MCF 10A (cell line): ENCODE measurements at regions of chr1 and their contacts with region 1.

Region 1: DNA sequence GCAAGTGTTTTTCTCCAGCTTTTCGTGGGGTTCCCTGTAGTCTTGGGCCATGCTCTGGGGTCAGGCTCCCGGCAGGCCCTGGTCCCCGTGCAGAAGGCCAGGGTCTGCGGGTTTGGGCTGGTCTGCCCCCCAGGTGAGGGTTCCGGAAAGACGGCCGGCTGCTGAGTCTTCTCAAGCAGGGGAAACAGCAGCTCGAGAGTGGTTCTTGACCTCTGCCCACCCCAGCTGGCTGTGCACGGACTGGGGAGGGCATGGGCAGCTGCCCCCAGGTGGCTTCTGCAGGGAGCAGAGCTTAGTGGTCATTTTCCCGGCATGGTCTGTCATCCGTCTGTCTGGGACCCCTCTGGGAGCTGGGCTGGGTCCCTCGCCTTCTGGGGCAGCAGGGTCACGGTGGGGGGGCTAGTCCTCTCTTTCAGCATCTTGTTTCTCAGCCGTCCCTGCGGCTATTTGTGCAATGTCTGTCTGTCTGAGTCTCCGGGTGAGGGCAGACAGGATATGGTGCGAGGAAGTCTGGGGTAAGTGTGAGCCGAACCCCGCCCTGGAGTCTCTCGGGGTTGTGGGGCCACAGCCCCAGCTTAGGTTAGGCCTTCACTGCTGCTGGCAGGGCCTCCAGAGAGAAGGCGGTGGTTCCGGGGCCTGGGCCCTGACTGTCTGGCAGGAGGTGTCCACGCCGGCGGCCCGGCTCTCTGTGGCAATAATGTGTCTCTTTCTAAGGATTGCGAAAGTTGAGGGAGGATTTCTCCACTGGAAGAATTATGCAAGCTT is 6.1 kb downstream of the SKI start:
- DNase-seq: peak; percentile 98
- H3K4me3 Mint-ChIP-seq: peak overlapping the region; percentile 63
- H3K27ac Mint-ChIP-seq: peak overlapping the region; percentile 44
- H3K4me1 Mint-ChIP-seq: peaks cover 23% of the 10 kb centered on the region
- H3K27me3 Mint-ChIP-seq: no peaks in the 10 kb centered on the region
- CTCF ChIP-seq: no peak

Region 2: GRCh38 chr1:2003278-2004131 is 230.7 kb before region 1 on chr1 and contains the start of gene CFAP74:
- CTCF ChIA-PET with region 1: no interaction called
- POLR2A ChIA-PET with region 1: no interaction called
- intact Hi-C with region 1: no loop called
- DNase-seq: no peak
- H3K4me3 Mint-ChIP-seq: no peak within 1 kb of the TSS
- H3K27ac Mint-ChIP-seq: no peak within 1 kb of the TSS
- H3K4me1 Mint-ChIP-seq: no peaks in the 10 kb centered on the region
- H3K27me3 Mint-ChIP-seq: no peaks in the 10 kb centered on the region
- CTCF ChIP-seq: no peak
- total RNA-seq, gene CFAP74: not detected in 2 replicates

Region 3: DNA sequence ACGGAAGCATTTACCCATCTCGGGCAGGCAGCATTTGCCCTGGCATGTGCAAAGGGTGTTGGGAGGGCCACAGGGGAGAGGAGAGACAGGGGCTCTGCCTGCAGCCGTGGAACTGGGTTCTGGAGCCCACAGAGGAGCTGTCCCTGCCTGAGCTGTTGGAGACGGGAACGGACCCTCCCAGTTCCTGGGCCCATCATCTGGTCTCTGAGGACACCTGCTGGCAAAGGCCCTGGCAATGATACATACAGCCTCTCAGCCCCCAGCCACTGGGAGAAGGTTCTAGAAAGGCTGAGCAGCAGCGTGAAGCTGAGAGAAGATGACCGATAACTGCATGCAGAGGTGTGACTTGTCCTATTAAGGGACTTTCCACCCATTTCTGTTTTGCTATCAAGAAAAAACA is 71.0 kb before region 1 on chr1:
- CTCF ChIA-PET with region 1: no interaction called
- POLR2A ChIA-PET with region 1: no interaction called
- intact Hi-C with region 1: no loop called
- DNase-seq: no peak
- H3K4me3 Mint-ChIP-seq: no peak overlapping the region
- H3K27ac Mint-ChIP-seq: no peak overlapping the region
- H3K4me1 Mint-ChIP-seq: no peaks in the 10 kb centered on the region
- H3K27me3 Mint-ChIP-seq: no peaks in the 10 kb centered on the region
- CTCF ChIP-seq: no peak

Region 4: DNA sequence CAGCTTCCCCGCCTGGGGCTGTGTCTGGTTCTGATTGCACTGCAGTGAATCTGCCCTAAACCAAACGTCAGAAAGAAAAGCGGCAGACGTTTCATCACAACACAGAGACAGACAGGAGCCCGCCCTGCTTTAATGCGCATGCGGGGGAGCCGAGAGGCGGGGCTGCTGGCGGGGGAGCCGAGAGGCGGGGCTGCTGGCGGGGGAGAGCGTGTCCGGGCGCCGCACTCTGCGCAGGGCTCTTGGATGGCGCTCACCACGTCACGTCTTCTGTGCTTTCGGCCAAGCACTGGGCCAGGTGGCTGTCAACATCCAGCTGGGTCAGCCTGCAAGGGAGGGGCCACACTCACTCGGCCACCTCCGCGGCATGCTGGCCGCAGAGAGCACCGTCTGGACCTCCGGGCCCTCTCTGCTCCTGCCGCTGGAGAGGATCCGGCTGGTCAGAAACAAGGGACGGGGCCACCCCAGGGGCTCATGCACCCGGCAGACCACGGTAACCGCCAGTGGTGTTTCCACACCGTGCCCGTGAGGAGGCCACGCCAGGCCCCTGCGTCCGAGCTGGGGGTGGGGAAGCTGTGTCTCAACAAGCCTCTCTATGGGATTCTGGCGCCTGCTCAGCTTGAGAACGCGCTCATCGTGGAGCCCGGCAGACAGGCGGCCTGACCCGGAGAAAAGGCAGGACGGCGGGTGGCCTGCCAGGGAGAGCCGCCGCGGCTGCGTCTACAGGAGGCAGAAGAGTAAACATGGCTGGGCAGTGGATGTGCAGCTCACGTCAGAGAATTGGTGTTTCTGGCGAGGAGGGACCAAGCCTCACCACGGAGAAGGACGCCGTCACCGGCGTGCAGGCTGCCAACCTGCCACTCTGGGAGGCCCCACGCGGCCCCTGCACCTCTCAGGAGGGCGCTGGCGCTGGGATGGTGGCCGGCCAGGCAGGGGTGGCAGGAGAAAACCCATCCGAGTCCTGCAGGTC is 44.4 kb before region 1 on chr1:
- CTCF ChIA-PET with region 1: interaction called, 10 read pairs
- POLR2A ChIA-PET with region 1: interaction called, 17 read pairs
- intact Hi-C with region 1: no loop called
- DNase-seq: peak; percentile 95
- H3K4me3 Mint-ChIP-seq: peak overlapping the region; percentile 83
- H3K27ac Mint-ChIP-seq: peak overlapping the region; percentile 82
- H3K4me1 Mint-ChIP-seq: peaks cover 5% of the 10 kb centered on the region
- H3K27me3 Mint-ChIP-seq: no peaks in the 10 kb centered on the region
- CTCF ChIP-seq: no peak

Region 5: DNA sequence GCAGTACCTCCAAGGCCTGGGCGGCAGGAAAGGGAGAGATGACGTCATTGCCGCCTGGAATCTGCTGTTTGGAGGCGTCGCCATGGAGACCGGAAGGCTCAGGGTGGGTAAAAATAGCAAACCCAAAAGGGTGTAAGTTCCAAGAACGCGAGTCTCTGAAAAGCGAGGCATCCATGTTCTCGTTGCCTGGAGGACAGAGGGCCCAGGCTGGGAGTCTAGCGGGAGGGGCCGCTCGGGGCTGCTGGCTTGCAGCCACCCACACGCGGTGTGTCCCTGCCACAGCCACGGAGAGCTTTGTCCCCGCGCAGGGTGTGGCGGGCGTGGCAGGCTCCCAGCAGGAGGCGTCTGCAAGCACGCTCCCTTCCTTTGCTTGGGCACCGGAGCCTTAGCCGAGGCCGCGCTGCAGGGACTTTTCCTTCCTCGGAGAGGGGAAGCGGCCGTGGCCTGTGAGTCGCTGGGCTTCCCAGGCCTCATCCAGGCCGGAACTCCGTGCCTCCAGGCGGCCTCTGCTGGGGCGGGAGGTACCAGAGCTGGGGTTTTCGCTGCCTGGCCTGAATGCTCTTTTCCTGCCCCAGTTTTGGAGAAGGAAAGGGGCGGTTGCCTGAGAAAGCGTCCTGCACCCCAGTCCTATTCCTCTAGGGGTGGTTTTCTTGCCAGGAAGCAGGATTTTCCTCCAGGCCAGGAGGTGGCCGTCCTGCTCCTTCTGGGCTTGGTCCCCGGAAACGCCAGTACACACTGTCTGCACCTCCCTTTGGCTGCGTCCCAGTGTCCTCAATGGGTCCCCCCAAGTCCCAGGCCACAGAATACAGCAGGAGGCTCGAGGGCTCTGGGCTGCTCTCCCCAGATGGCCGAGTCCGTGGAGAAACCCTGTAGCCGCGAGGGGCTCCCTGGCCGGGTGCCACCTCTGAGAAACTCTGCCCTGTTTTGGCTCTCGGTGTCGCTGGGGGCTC is 21.4 kb before region 1 on chr1:
- CTCF ChIA-PET with region 1: interaction called, 14 read pairs
- POLR2A ChIA-PET with region 1: interaction called, 23 read pairs
- intact Hi-C with region 1: loop called (anchors 1 kb)
- DNase-seq: peak; percentile 89
- H3K4me3 Mint-ChIP-seq: peak overlapping the region; percentile 16
- H3K27ac Mint-ChIP-seq: peak overlapping the region; percentile 83
- H3K4me1 Mint-ChIP-seq: peaks cover 14% of the 10 kb centered on the region
- H3K27me3 Mint-ChIP-seq: no peaks in the 10 kb centered on the region
- CTCF ChIP-seq: peak; percentile 13

Region 6: DNA sequence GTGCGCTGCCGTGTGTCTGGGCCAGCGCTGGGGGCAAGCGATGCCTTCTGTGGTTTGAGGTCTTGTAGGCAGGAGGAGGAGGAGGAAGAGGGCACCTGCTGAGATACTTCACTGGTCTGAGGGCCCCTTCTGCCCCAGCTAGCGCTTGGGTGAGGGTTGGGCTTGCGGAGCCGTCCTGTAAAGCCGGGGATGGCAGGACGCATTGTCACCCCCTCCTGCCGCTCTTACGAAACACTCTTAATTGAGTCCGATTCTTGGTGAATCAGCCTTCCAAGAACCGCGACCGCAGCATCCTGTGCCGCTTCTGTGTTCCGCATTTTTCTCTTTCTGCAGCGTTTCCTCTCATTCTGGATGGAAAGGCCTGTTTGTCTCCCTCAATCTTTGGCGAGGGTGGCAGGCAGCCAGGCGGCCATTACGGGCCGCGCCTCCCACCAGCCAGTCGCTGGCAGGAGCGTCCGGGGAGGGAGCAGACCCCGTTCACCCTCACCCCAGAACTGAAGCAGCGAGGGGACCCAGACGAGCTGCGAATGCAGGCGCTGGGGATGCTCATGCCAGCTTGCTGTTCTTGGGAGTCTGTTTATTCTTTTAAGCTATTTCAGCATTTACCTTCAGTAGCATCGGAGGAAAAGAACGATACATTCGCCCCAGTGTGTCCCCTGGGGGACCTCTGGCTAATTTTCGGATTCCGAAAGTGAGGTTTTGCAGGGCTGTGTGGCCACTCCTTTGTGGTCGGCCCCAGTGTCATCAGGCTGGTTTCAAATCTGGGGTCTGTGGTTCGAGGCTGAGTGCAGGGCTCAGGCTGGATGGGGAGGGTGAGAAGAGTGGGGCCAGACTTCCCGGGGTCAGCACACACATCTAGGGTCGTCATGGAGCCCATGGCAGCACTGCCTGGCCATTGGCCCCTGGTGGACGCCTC is 56.7 kb after region 1 on chr1:
- CTCF ChIA-PET with region 1: no interaction called
- POLR2A ChIA-PET with region 1: interaction called, 4 read pairs
- intact Hi-C with region 1: loop called (anchors 5 kb)
- DNase-seq: peak; percentile 97
- H3K4me3 Mint-ChIP-seq: peak overlapping the region; percentile 69
- H3K27ac Mint-ChIP-seq: peak overlapping the region; percentile 81
- H3K4me1 Mint-ChIP-seq: peaks cover 26% of the 10 kb centered on the region
- H3K27me3 Mint-ChIP-seq: no peaks in the 10 kb centered on the region
- CTCF ChIP-seq: no peak

Region 7: DNA sequence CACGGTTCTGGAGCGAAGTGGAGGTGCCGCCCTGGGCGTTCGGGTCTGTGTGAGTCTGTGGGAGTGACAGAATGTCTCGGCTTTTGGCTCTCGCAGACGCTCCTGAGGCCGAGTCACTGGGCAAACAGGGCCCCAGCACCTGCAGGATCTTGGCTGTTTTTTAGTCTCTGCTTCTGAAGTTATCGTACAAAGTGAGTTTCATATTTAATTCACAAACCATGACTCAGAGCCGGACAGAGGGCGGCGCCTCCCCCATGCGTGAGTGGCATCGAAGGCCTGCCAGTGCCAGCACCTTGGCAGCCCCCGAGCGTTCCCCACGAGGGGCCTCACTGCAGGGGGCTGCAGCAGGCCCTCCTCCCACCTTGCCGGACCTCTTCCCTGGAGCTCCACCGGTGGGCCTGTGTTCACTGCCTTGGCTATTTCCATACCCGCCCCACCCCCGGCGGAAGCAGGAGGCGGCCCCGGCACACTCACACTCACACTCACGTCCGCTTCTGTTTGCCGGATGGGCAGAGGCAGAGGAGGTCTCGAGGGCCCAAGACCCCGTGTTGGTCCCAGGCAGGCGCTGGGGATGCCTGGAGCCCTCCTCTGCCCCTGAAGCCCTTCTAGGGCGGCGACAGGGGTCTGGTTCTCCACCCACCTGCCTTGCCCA is 100.8 kb after region 1 on chr1:
- CTCF ChIA-PET with region 1: no interaction called
- POLR2A ChIA-PET with region 1: no interaction called
- intact Hi-C with region 1: no loop called
- DNase-seq: no peak
- H3K4me3 Mint-ChIP-seq: no peak overlapping the region
- H3K27ac Mint-ChIP-seq: no peak overlapping the region
- H3K4me1 Mint-ChIP-seq: no peaks in the 10 kb centered on the region
- H3K27me3 Mint-ChIP-seq: peaks cover 9% of the 10 kb centered on the region
- CTCF ChIP-seq: no peak

Region 8: GRCh38 chr1:2391041-2391930 is 157.1 kb after region 1 on chr1 and contains the starts of genes MORN1 and RER1:
- CTCF ChIA-PET with region 1: interaction called, 4 read pairs
- POLR2A ChIA-PET with region 1: interaction called, 16 read pairs
- intact Hi-C with region 1: no loop called
- DNase-seq: peak; percentile 98
- H3K4me3 Mint-ChIP-seq: peak within 1 kb of the TSS; percentile 66
- H3K27ac Mint-ChIP-seq: peak within 1 kb of the TSS; percentile 87
- H3K4me1 Mint-ChIP-seq: peaks cover 18% of the 10 kb centered on the region
- H3K27me3 Mint-ChIP-seq: no peaks in the 10 kb centered on the region
- CTCF ChIP-seq: no peak
- total RNA-seq, gene MORN1: 19.4 and 28.0 TPM in 2 replicates
- total RNA-seq, gene RER1: 172 and 224 TPM in 2 replicates

Region 9: GRCh38 chr1:2642560-2643413 is 408.6 kb after region 1 on chr1:
- CTCF ChIA-PET with region 1: no interaction called
- POLR2A ChIA-PET with region 1: no interaction called
- intact Hi-C with region 1: no loop called
- DNase-seq: peak; percentile 87
- H3K4me3 Mint-ChIP-seq: peak overlapping the region; percentile 88
- H3K27ac Mint-ChIP-seq: peak overlapping the region; percentile 80
- H3K4me1 Mint-ChIP-seq: peaks cover 6% of the 10 kb centered on the region
- H3K27me3 Mint-ChIP-seq: no peaks in the 10 kb centered on the region
- CTCF ChIP-seq: no peak